Prostate gland (tissue), 2 donors: ENCODE measurements at regions of chr5 and their contacts with region 1.

Region 1: DNA sequence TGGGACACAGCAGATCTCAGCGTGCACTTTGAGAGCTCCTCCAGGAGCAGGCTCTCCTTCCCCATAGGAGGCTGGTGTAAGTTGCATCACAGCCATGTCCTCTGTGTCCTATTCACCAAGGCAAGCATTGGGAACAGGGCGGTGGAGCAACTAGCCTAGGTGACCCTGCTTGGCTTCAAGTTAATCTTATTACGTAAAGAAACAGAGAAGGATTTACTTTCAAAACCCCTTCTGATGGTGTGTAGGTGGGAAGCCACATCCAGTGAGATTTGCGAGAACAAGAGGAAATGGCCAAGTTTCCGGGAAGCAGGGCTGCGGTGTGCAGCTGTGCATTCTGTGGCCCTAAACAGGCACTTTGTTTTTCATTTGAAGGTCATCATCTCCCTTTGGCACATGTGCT is 80.2 kb downstream of the TRIO start:
- DNase-seq: no peak
- H3K4me3 ChIP-seq: no peak overlapping the region
- H3K27ac ChIP-seq: no peak overlapping the region
- H3K4me1 ChIP-seq: peaks cover 6% of the 10 kb centered on the region
- H3K27me3 ChIP-seq: no peaks in the 10 kb centered on the region
- CTCF ChIP-seq: no peak
- POLR2A ChIP-seq: no peak

Region 2: DNA sequence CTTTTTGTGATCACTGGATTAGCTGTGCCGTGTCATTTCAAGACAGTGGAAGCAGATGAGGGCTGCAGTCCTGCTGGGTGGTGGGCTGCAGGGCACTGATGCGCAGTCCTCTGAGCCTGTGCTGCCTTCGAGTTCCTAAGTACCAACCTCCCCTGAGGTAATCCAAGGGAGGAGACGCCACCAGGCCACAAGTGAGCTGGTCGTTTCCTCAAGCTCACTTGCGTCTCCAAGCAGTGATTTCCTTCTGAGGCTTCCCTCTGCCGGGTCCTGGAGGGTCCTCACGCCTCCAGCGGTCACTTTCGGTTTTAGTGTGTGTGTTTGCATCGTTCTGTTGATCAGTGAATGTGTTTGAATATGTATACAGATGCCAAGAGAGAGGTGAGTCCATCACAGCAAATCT is 35.5 kb after region 1 on chr5:
- intact Hi-C with region 1: loop called (anchors 5 kb)
- DNase-seq: no peak
- H3K4me3 ChIP-seq: no peak overlapping the region
- H3K27ac ChIP-seq: peak overlapping the region in 1 of 2 donors; percentile 4
- H3K4me1 ChIP-seq: peaks cover 12% of the 10 kb centered on the region
- H3K27me3 ChIP-seq: no peaks in the 10 kb centered on the region
- CTCF ChIP-seq: no peak
- POLR2A ChIP-seq: no peak

Region 3: DNA sequence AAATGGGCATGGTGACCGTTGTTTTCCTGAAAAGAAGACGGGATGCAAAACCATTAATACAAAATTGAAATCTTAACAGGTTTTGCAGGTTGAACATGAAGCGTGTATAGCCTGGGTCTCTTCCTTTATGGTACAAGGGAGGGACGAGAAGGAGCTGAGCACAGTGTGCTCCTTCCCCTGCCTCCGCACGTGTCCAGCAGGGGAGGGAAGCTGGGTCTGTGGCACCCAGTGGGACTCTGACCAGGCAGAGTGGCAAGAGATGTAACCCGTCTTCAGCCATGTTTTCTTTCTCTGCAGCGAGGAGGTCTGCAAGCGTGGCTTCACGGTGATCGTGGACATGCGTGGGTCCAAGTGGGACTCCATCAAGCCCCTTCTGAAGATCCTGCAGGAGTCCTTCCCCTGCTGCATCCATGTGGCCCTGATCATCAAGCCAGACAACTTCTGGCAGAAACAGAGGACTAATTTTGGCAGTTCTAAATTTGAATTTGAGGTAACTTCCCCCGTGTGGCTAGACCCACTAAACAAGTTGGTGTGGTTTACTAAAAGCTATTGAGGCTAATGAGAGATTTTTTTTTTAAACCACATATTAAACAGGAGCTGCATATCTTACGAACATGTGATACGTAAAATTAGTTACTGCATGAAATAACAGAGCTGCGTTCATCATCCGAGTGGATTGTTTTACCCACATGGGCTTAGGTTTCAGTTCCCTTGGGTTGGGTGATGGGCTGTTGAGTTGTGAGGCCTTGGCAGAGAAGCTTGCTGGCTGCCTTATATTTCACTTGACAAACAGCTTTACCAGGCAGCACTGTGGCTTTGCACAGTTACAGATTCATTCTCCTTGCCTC is 63.4 kb after region 1 on chr5:
- intact Hi-C with region 1: no loop called
- DNase-seq: no peak
- H3K4me3 ChIP-seq: no peak overlapping the region
- H3K27ac ChIP-seq: no peak overlapping the region
- H3K4me1 ChIP-seq: no peaks in the 10 kb centered on the region
- H3K27me3 ChIP-seq: no peaks in the 10 kb centered on the region
- CTCF ChIP-seq: no peak
- POLR2A ChIP-seq: no peak

Region 4: DNA sequence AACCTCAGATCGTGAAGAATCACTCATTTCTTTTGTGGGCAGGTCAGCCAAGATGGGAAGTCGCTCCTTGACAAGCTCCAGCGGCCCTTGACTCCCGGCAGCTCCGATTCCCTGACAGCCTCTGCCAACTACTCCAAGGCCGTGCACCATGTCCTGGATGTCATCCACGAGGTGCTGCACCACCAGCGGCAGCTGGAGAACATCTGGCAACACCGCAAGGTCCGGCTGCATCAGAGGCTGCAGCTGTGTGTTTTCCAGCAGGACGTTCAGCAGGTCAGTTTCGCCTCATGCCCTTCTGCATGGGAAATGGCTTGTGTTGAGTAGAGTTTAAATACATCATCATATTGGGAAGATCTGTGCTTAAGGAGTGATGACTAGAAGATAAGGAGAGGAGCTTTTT is 93.1 kb after region 1 on chr5:
- intact Hi-C with region 1: no loop called
- DNase-seq: no peak
- H3K4me3 ChIP-seq: no peak overlapping the region
- H3K27ac ChIP-seq: no peak overlapping the region
- H3K4me1 ChIP-seq: no peaks in the 10 kb centered on the region
- H3K27me3 ChIP-seq: no peaks in the 10 kb centered on the region
- CTCF ChIP-seq: no peak
- POLR2A ChIP-seq: no peak

Region 5: DNA sequence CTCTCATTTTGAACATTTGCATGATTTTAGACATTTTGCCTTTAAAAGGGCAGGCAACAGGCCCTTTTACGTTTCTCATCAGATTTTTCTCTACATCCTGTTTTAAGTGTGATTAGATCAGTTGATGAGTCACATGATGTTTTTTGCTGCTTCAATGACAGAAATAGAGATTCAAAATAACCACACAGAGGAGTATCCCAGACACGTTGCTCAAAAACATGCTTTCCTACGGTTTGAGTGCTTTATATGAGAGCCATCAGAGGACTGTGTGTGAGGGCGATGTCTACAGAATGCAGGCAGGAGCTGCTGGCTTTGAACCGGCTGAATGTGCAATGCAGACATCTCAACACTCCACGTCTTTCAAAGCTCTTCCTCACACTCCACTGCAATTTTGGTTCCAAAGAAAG is 483.2 kb after region 1 on chr5:
- intact Hi-C with region 1: no loop called
- DNase-seq: no peak
- H3K4me3 ChIP-seq: no peak overlapping the region
- H3K27ac ChIP-seq: peak overlapping the region in 1 of 2 donors; percentile 51
- H3K4me1 ChIP-seq: no peaks in the 10 kb centered on the region
- H3K27me3 ChIP-seq: no peaks in the 10 kb centered on the region
- CTCF ChIP-seq: no peak
- POLR2A ChIP-seq: no peak